ENCODE measurements at regions of chr7 and their contacts with region 1.

Region 1: DNA sequence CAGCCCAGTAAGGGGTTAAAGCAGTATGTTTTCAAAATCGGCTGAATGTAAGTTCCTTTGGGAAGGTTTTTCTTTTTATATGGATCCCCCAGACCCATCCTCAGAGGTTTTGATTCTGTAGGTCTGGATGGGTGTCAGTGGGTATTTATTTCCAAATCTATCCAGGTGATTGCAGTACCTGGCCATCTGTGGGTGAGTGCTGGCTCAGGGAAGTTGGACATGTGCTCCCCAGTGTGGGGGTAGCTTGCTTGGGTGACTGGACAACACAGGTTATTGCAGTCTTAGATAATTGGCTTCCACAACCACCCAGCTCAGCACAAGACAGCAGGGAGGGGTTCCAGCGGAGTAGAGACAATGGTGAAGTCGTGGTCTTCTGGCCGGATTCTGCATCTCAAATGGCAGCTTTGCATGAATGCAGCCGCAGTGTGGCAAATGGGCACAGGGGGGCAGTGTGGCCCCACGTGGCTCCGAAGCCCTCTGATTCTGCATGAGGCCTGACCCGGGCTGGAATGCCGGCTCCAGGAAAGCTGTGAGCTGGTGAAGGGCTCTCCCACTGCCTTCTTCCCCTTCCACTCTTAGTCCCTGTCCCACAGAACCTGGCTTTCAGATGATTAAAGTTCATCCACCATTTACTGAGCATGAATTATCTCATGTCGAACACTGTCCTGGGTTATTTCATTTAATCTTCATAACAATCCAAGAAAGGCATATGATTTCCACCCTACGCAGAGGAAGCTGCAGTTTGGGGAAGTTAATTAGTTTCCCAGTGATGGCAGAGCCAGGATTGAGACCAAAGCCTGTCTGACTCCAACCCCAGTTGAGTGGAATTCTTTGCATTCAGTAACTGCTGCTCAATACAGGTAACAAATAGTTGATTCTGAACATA is 64.5 kb upstream of the SYPL1 start:
- DNase-seq: peak; percentile 46
- H3K4me3 ChIP-seq: no peak overlapping the region
- H3K27ac ChIP-seq: no peak overlapping the region
- H3K27me3 ChIP-seq: peaks cover 4% of the 10 kb centered on the region
- CTCF ChIP-seq: peak; percentile 96

Region 2: DNA sequence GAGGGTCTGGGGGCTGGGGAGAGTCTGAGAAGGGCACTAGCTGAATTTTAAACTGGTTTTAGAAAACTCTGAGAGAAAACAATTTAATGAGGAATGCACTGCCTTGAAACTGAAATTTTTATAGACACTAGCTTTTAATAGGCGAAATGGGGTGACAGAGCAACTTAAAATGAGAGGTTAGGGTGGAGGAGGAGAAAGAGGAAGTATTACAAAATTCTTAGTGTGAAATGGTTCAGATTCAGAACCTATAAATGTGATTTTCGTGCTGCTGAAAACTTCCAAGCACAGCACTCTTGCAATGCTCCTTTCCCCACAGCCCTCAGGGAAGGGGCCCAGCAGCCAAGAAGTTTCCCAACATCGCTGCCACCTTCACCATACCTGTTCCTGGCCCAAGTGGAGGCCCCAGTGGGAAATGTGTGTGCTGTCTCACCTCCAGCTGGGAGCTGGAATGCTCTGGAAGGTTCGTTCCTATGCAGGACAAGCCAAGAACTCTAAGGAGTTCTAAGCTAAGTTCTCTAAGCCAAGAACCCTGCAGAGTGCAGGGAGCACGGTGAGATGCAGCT is 360.3 kb before region 1 on chr7:
- CTCF ChIA-PET with region 1: no interaction called
- POLR2A ChIA-PET with region 1: no interaction called
- DNase-seq: no peak
- H3K4me3 ChIP-seq: no peak overlapping the region
- H3K27ac ChIP-seq: no peak overlapping the region
- H3K27me3 ChIP-seq: no peaks in the 10 kb centered on the region
- CTCF ChIP-seq: no peak

Region 3: DNA sequence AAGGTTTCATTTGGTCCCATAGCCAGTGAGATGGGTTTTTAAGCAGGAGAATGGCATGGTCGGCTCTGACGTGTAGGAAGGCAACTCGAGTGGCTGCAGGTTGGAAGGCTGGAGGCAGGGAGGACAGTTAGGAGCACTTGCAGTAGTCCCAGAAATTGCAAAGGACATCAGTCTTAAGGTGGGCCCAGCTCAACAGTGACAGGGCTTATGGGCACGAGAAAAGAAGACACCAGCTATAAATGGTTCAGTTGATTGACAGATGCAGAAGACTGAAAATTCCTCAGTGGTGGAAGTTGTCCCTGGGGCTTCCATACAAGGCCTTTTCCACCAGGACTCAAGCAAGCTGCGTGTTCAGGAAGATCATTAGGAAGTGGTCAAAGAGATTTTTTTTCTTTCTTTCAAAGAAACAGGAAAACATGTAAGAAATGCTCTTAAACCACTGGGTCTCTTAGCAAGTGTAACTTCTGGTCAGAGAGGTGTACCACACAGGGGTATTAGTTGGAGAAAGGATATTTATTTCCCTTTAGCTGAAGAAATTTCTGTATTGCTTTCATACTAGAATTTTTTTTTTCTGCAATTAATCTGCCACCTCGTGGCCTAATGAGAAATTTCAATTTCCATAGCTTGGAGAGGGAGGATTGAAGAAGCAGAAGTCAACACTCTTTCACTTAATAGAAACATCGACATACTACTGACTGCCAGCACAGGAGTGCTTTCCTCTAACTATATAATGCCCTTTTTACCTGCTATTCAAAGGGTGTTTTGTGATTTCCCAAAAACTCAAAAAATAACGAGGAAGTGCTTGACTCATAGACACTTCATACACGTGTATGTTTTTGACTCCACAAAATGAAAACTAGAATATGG is 285.6 kb after region 1 on chr7:
- CTCF ChIA-PET with region 1: interaction called, 287 read pairs
- POLR2A ChIA-PET with region 1: no interaction called
- DNase-seq: peak; percentile 8
- H3K4me3 ChIP-seq: no peak overlapping the region
- H3K27ac ChIP-seq: no peak overlapping the region
- H3K27me3 ChIP-seq: no peaks in the 10 kb centered on the region
- CTCF ChIP-seq: peak; percentile 59

Region 4: DNA sequence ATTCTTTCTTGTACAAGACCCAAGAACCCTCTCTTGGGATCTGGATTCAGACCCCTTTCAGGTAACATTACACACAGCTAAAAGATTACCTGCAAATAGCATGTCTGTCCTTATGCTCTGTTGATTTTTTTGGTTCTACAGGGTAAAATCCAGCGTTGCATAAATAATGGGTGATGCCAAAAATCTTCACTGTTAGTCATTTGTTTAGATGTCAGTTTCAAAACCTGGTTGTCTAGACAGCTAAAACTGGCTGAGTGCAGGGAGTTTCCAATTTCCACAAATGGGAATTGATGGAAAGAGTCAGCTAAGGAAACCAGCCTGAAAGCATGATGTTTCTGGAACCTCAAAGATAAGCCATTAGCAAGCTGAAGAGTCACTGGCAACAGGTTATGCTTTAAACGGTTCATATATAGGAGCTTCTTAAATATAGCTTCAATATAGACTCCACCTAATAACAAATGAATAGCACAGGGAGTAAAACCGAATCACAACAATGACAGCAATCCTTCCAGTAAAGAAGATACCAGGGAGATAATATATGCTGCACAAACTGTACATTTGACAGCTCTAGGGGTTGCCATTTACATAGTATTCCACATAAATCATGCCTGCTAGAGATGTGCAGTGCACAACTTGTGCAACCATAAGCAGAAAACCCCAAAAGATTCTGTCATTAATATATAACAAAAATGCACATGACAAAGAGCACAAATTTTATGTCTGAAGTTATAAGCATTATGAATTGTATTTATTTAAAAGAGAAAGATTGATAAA is 463.9 kb after region 1 on chr7:
- CTCF ChIA-PET with region 1: interaction called, 10 read pairs
- POLR2A ChIA-PET with region 1: no interaction called
- DNase-seq: no peak
- H3K4me3 ChIP-seq: no peak overlapping the region
- H3K27ac ChIP-seq: no peak overlapping the region
- H3K27me3 ChIP-seq: no peaks in the 10 kb centered on the region
- CTCF ChIP-seq: no peak

Region 5: GRCh38 chr7:106659963-106660861 is 483.6 kb after region 1 on chr7:
- CTCF ChIA-PET with region 1: interaction called, 21 read pairs
- POLR2A ChIA-PET with region 1: interaction called, 3 read pairs
- DNase-seq: no peak
- H3K4me3 ChIP-seq: peak overlapping the region; percentile 95
- H3K27ac ChIP-seq: peak overlapping the region; percentile 87
- H3K27me3 ChIP-seq: no peaks in the 10 kb centered on the region
- CTCF ChIP-seq: peak; percentile 78

Region 6: GRCh38 chr7:106736508-106737201 is 560.0 kb after region 1 on chr7:
- CTCF ChIA-PET with region 1: interaction called, 69 read pairs
- POLR2A ChIA-PET with region 1: no interaction called
- DNase-seq: peak; percentile 56
- H3K4me3 ChIP-seq: no peak overlapping the region
- H3K27ac ChIP-seq: peak overlapping the region; percentile 63
- H3K27me3 ChIP-seq: no peaks in the 10 kb centered on the region
- CTCF ChIP-seq: peak; percentile 82